ENCODE measurements at regions of chr20 and their contacts with region 1.

Region 1: GRCh38 chr20:47317127-47317895 is 39.2 kb downstream of the ZMYND8 start:
- DNase-seq: peak; percentile 56
- ATAC-seq: no peak
- H3K4me3 ChIP-seq: peak overlapping the region in 1 of 3 experiments; percentile 55; a peak in 1 of 6 replicates
- H3K27ac ChIP-seq: peak overlapping the region; percentile 82
- H3K4me1 ChIP-seq: peaks cover 100% of the 10 kb centered on the region
- H3K27me3 ChIP-seq: no peaks in the 10 kb centered on the region
- CTCF ChIP-seq: no peak
- EP300 ChIP-seq: no peak
- POLR2A ChIP-seq: peak in 1 of 2 experiments; percentile 45; a peak in 1 of 4 replicates
- RAD21 ChIP-seq: no peak

Region 2: DNA sequence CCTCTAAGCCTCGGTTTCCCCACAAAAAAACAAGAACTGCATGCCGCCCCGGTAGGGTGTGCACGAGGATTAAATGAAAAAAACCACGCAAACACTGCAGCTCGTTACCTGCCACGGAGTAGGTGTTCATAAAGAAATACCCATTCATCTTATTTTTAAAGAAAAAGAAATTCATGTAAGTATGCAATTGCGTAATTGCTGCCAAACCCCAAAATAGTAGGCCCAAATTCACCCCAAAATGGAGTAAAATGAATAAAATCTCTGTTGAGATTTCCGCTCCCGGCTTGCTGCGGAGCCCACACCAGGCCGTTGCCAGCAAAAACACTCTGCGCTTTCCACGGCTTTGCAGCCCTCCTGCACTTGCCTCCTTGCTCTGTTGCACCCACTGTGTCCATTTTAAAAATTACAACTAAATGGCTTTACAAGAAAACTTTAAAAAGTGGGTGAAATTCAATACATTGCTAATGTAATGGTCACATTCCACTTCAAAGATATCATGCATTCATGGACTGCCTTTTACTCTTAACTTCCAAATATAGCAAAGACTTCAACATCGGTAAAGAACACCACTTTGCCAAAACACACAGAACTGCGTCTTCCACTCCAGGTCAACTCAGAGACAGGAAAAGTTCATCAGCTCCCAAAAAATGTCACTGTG is 85.8 kb before region 1 on chr20:
- CTCF ChIA-PET with region 1: no interaction called
- POLR2A ChIA-PET with region 1: interaction called, 3 read pairs
- in situ Hi-C with region 1: no loop called
- intact Hi-C with region 1: loop called (anchors 5 kb)
- DNase-seq: no peak
- ATAC-seq: no peak
- H3K4me3 ChIP-seq: no peak overlapping the region
- H3K27ac ChIP-seq: no peak overlapping the region
- H3K4me1 ChIP-seq: peaks cover 43% of the 10 kb centered on the region
- H3K27me3 ChIP-seq: no peaks in the 10 kb centered on the region
- CTCF ChIP-seq: no peak
- EP300 ChIP-seq: no peak
- POLR2A ChIP-seq: no peak
- RAD21 ChIP-seq: no peak

Region 3: DNA sequence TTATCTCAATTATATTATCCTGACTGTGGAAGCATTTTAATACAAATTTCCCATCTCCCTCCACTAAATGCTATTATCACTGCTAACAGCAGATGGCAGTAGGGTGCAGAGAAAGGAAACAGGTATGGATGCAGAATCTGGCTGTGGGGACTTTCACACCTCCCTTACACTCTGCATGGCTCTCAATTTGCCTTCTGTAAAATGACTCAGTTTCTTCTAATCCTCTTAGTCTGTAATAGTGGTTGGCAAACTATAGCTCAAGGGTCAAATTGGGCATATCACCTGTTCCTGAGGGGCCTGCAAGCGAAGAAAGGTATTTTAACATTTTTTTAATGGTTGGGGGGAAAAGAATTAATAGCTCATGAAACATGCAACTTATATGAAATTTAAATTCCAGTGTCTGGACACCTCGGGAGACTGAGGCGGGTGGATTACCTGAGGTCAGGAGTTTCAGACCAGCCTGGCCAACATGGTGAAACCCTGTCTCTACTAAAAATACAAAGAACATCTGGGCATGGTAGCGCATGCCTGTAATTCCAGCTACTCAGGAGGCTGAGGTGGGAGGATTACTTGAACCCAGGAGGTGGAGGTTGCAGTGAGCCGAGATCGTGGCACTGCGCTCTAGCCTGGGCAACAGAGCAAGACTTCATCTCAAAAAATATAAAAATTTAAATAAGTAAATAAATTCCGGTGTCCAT is 44.3 kb before region 1 on chr20:
- CTCF ChIA-PET with region 1: no interaction called
- POLR2A ChIA-PET with region 1: no interaction called
- in situ Hi-C with region 1: no loop called
- intact Hi-C with region 1: loop called (anchors 5 kb)
- DNase-seq: peak; percentile 78
- ATAC-seq: peak; percentile 63
- H3K4me3 ChIP-seq: no peak overlapping the region
- H3K27ac ChIP-seq: no peak overlapping the region
- H3K4me1 ChIP-seq: peaks cover 23% of the 10 kb centered on the region
- H3K27me3 ChIP-seq: no peaks in the 10 kb centered on the region
- CTCF ChIP-seq: peak; percentile 91
- EP300 ChIP-seq: no peak
- POLR2A ChIP-seq: no peak
- RAD21 ChIP-seq: peak; percentile 86

Region 4: GRCh38 chr20:47304287-47304686 is 13.0 kb before region 1 on chr20:
- CTCF ChIA-PET with region 1: interaction called, 3 read pairs
- POLR2A ChIA-PET with region 1: interaction called, 4 read pairs
- in situ Hi-C with region 1: no loop called
- intact Hi-C with region 1: loop called (anchors 2 kb)
- DNase-seq: no peak
- ATAC-seq: peak; percentile 61
- H3K4me3 ChIP-seq: no peak overlapping the region
- H3K27ac ChIP-seq: no peak overlapping the region
- H3K4me1 ChIP-seq: peaks cover 28% of the 10 kb centered on the region
- H3K27me3 ChIP-seq: no peaks in the 10 kb centered on the region
- CTCF ChIP-seq: no peak
- EP300 ChIP-seq: no peak
- POLR2A ChIP-seq: 0 out of 4 replicates have a peak, but pooled peaks of 1 of the 2 experiments have one; percentile 22
- RAD21 ChIP-seq: no peak

Region 5: GRCh38 chr20:47334022-47334551 is 16.8 kb after region 1 on chr20:
- CTCF ChIA-PET with region 1: no interaction called
- POLR2A ChIA-PET with region 1: interaction called, 8 read pairs
- in situ Hi-C with region 1: no loop called
- intact Hi-C with region 1: loop called (anchors 1 kb)
- DNase-seq: peak; percentile 99
- ATAC-seq: peak; percentile 90
- H3K4me3 ChIP-seq: peak overlapping the region in 1 of 3 experiments; percentile 41; a peak in 1 of 6 replicates
- H3K27ac ChIP-seq: peak overlapping the region; percentile 57
- H3K4me1 ChIP-seq: peaks cover 97% of the 10 kb centered on the region
- H3K27me3 ChIP-seq: no peaks in the 10 kb centered on the region
- CTCF ChIP-seq: no peak
- EP300 ChIP-seq: peak; percentile 64 to 84; a peak in 2 of 4 replicates
- POLR2A ChIP-seq: no peak
- RAD21 ChIP-seq: no peak

Region 6: DNA sequence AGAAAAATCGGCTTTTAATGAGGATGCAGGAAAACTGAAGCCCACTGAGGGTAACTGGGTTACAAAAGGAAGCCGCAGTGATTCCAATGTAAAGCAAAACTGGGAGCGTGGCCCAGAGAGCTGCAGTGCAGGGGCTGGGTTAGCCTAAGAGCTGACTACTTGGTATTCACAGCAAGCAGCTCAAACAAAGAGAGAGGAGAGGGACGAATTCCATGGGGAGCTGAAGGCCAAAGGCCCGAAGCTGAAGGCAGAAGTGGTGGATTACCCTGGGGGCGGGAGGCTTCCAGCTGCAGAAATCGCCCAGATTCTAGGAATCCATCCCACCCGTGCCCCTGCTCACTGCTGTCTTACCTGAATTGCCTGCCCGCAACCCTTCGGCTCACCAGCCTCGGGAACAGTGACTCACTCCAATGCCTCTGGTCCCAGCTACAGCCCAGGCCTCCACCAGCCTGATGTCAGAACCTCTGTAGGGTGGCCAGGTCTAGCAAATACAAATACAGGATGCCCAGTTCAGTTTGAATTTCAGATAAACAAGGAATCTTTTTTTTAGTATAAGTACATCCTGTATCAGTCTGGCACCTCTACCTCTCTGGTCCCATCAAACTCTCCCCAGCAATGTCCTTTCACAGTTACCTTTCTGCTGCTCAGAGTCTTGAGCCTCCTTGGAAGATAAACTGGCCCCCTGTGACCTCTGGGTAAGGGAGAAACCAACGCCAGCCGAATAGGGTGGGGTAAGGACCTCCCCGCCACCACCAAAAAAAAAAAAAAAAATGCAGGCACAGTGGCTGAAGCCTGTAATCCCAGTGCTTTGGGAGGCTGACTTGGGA is 53.8 kb after region 1 on chr20:
- CTCF ChIA-PET with region 1: no interaction called
- POLR2A ChIA-PET with region 1: interaction called, 10 read pairs
- in situ Hi-C with region 1: no loop called
- intact Hi-C with region 1: no loop called
- DNase-seq: peak; percentile 70
- ATAC-seq: peak; percentile 89
- H3K4me3 ChIP-seq: peak overlapping the region; percentile 3 to 51 (median 49); a peak in 5 of 6 replicates
- H3K27ac ChIP-seq: peak overlapping the region; percentile 36
- H3K4me1 ChIP-seq: peaks cover 42% of the 10 kb centered on the region
- H3K27me3 ChIP-seq: no peaks in the 10 kb centered on the region
- CTCF ChIP-seq: no peak
- EP300 ChIP-seq: no peak
- POLR2A ChIP-seq: peak in 1 of 2 experiments; percentile 51; a peak in 2 of 4 replicates
- RAD21 ChIP-seq: 0 out of 2 replicates have a peak, but pooled peaks have one; percentile 7

Region 7: GRCh38 chr20:47379433-47380150 is 62.3 kb after region 1 on chr20:
- CTCF ChIA-PET with region 1: interaction called, 6 read pairs
- POLR2A ChIA-PET with region 1: interaction called, 4 read pairs
- in situ Hi-C with region 1: no loop called
- intact Hi-C with region 1: loop called (anchors 5 kb)
- DNase-seq: no peak
- ATAC-seq: peak; percentile 9; the same call in 2 of the 3 replicates
- H3K4me3 ChIP-seq: no peak overlapping the region
- H3K27ac ChIP-seq: no peak overlapping the region
- H3K4me1 ChIP-seq: peaks cover 45% of the 10 kb centered on the region
- H3K27me3 ChIP-seq: no peaks in the 10 kb centered on the region
- CTCF ChIP-seq: no peak
- EP300 ChIP-seq: no peak
- POLR2A ChIP-seq: no peak
- RAD21 ChIP-seq: no peak

Region 8: GRCh38 chr20:47400685-47401084 is 83.4 kb after region 1 on chr20:
- CTCF ChIA-PET with region 1: no interaction called
- POLR2A ChIA-PET with region 1: no interaction called
- in situ Hi-C with region 1: no loop called
- intact Hi-C with region 1: no loop called
- DNase-seq: no peak
- ATAC-seq: no peak; the same call in 2 of the 3 replicates
- H3K4me3 ChIP-seq: no peak overlapping the region
- H3K27ac ChIP-seq: no peak overlapping the region
- H3K4me1 ChIP-seq: peaks cover 38% of the 10 kb centered on the region
- H3K27me3 ChIP-seq: no peaks in the 10 kb centered on the region
- CTCF ChIP-seq: no peak
- EP300 ChIP-seq: no peak
- POLR2A ChIP-seq: no peak
- RAD21 ChIP-seq: no peak